Caco-2 (cell line): ENCODE measurements at regions of chr5 and their contacts with region 1.

Region 1: GRCh38 chr5:127492854-127493738 is 24.3 kb upstream of the PRRC1 start:
- DNase-seq: peak in 1 of 2 experiments; percentile 17
- H3K4me3 ChIP-seq: no peak overlapping the region
- H3K4me3 Mint-ChIP-seq: no peak overlapping the region
- H3K27ac Mint-ChIP-seq: no peak overlapping the region
- H3K4me1 ChIP-seq: no peaks in the 10 kb centered on the region
- H3K4me1 Mint-ChIP-seq: no peaks in the 10 kb centered on the region
- H3K27me3 ChIP-seq: no peaks in the 10 kb centered on the region
- H3K27me3 Mint-ChIP-seq: peaks cover 35% of the 10 kb centered on the region
- CTCF ChIP-seq: peak; percentile 70 to 93

Region 2: DNA sequence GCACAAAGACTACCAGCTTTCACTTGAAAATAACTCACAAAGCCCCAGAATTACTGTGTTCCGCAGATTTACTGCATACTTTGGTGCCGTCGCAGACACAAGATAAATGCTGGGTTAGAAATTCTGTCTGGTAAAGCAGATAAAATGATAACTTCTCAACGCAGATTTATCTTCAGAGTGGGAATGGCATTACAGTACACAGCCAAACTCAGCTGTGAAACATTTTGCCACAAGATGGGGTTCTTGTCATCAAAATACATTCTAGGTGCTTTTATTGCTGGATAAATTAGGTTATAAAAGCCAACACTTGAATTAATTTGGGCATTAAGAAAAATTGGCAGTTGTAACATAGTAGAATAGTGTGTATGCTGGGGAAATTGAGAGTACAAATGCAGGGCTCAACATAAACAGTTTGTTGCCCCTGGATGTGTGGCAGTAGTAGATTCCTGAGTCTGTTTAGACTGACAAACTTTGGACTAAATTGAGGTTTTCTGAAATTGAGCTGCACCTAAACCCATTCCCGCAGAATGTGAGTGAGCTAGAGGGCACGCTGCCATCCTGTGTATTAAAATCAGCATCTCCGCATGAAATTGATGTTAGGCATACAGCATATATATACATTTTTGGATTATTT is 655.1 kb before region 1 on chr5:
- CTCF ChIA-PET with region 1: no interaction called
- POLR2A ChIA-PET with region 1: no interaction called
- intact Hi-C with region 1: loop called (anchors 10 kb)
- DNase-seq: no peak
- H3K4me3 ChIP-seq: no peak overlapping the region
- H3K4me3 Mint-ChIP-seq: no peak overlapping the region
- H3K27ac Mint-ChIP-seq: no peak overlapping the region
- H3K4me1 ChIP-seq: no peaks in the 10 kb centered on the region
- H3K4me1 Mint-ChIP-seq: no peaks in the 10 kb centered on the region
- H3K27me3 ChIP-seq: no peaks in the 10 kb centered on the region
- H3K27me3 Mint-ChIP-seq: no peaks in the 10 kb centered on the region
- CTCF ChIP-seq: no peak

Region 3: GRCh38 chr5:127235136-127235535 is 258.0 kb before region 1 on chr5:
- CTCF ChIA-PET with region 1: no interaction called
- POLR2A ChIA-PET with region 1: no interaction called
- intact Hi-C with region 1: no loop called
- DNase-seq: no peak
- H3K4me3 ChIP-seq: no peak overlapping the region
- H3K4me3 Mint-ChIP-seq: no peak overlapping the region
- H3K27ac Mint-ChIP-seq: no peak overlapping the region
- H3K4me1 ChIP-seq: no peaks in the 10 kb centered on the region
- H3K4me1 Mint-ChIP-seq: no peaks in the 10 kb centered on the region
- H3K27me3 ChIP-seq: no peaks in the 10 kb centered on the region
- H3K27me3 Mint-ChIP-seq: peaks cover 8% of the 10 kb centered on the region
- CTCF ChIP-seq: no peak

Region 4: GRCh38 chr5:127280491-127281220 is 212.4 kb before region 1 on chr5:
- CTCF ChIA-PET with region 1: no interaction called
- POLR2A ChIA-PET with region 1: no interaction called
- intact Hi-C with region 1: loop called (anchors 1 kb)
- DNase-seq: peak in 1 of 2 experiments; percentile 35
- H3K4me3 ChIP-seq: no peak overlapping the region
- H3K4me3 Mint-ChIP-seq: no peak overlapping the region
- H3K27ac Mint-ChIP-seq: no peak overlapping the region
- H3K4me1 ChIP-seq: no peaks in the 10 kb centered on the region
- H3K4me1 Mint-ChIP-seq: no peaks in the 10 kb centered on the region
- H3K27me3 ChIP-seq: no peaks in the 10 kb centered on the region
- H3K27me3 Mint-ChIP-seq: no peaks in the 10 kb centered on the region
- CTCF ChIP-seq: peak in 1 of 2 experiments; percentile 54

Region 5: DNA sequence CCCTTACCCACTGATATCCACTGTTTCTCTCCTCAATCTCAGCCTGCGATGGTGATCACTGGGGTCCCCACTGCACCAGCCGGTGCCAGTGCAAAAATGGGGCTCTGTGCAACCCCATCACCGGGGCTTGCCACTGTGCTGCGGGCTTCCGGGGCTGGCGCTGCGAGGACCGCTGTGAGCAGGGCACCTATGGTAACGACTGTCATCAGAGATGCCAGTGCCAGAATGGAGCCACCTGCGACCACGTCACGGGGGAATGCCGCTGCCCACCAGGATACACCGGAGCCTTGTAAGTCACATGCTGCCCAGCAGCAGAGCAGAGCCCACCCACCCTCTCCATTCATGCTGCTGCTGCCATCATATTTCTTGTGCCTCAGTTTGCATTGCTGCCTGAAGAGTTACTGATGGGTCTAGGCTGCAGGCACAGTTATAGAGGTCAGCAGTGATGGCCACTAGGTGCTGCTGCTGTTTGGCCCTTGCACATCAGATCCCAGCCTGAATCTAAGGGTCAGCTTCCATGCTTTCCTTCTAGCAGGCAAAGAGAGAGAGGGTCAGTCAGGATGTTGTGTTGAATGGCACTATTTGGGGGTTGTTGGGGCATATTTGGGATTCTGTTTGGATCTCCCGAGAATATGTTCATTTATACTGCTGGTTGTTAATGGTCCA is 96.5 kb before region 1 on chr5:
- CTCF ChIA-PET with region 1: interaction called, 3 read pairs
- POLR2A ChIA-PET with region 1: no interaction called
- intact Hi-C with region 1: loop called (anchors 1 kb)
- DNase-seq: no peak
- H3K4me3 ChIP-seq: no peak overlapping the region
- H3K4me3 Mint-ChIP-seq: no peak overlapping the region
- H3K27ac Mint-ChIP-seq: no peak overlapping the region
- H3K4me1 ChIP-seq: no peaks in the 10 kb centered on the region
- H3K4me1 Mint-ChIP-seq: no peaks in the 10 kb centered on the region
- H3K27me3 ChIP-seq: peaks cover 1% of the 10 kb centered on the region; the same call in 1 of the 2 replicates
- H3K27me3 Mint-ChIP-seq: peaks cover 31% of the 10 kb centered on the region
- CTCF ChIP-seq: peak in 1 of 2 experiments; percentile 45

Region 6: DNA sequence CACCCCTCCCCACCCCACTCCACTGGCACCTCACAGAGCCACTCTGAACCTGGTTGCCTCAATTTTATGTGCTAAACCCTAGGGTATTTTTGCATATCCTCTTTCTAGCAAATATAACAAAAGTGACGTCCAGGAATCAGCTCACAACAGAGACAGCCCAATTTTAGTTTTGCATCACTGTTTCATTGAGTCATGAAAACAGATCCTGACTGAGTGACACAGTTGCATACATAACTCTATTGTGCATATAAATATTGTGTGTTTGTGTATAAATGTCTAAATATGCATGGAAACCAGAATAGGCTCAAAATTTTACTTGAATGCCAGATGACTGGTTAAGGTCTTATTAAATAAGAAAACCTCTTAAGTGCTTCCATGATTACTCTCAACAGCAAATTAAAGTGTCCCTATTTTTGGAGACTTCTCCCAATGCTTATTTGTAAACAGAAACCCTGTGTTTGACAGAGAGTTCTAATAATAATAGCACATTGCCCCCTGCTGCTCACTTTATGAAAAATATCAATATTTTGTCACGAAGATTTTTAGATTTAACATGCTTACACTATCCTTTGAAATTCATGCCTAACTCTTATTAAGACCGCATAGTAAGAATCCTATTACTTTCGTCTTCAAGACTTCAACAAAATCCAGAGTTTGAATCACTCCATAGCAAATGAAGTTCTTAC is 51.2 kb before region 1 on chr5:
- CTCF ChIA-PET with region 1: no interaction called
- POLR2A ChIA-PET with region 1: no interaction called
- intact Hi-C with region 1: no loop called
- DNase-seq: no peak
- H3K4me3 ChIP-seq: no peak overlapping the region
- H3K4me3 Mint-ChIP-seq: no peak overlapping the region
- H3K27ac Mint-ChIP-seq: no peak overlapping the region
- H3K4me1 ChIP-seq: no peaks in the 10 kb centered on the region; the same call in 1 of the 2 replicates
- H3K4me1 Mint-ChIP-seq: no peaks in the 10 kb centered on the region
- H3K27me3 ChIP-seq: no peaks in the 10 kb centered on the region
- H3K27me3 Mint-ChIP-seq: peaks cover 7% of the 10 kb centered on the region
- CTCF ChIP-seq: peak in 1 of 2 experiments; percentile 13